ENCODE measurements at regions of chr4 and their contacts with region 1.

Region 1: GRCh38 chr4:1289207-1290164 is at the start of gene MAEA:
- DNase-seq: peak; percentile 98
- H3K4me3 Mint-ChIP-seq: peak within 1 kb of the TSS; percentile 87
- H3K27ac Mint-ChIP-seq: peak within 1 kb of the TSS; percentile 82
- H3K4me1 Mint-ChIP-seq: peaks cover 40% of the 10 kb centered on the region
- H3K27me3 Mint-ChIP-seq: no peaks in the 10 kb centered on the region
- total RNA-seq, gene MAEA: 25.2 to 29.4 TPM

Region 2: GRCh38 chr4:1130316-1131186 is 158.9 kb before region 1 on chr4:
- CTCF ChIA-PET with region 1: interaction called, 54 read pairs
- intact Hi-C with region 1: loop called (anchors 1 kb)
- DNase-seq: peak; percentile 80
- H3K4me3 Mint-ChIP-seq: no peak overlapping the region
- H3K27ac Mint-ChIP-seq: no peak overlapping the region
- H3K4me1 Mint-ChIP-seq: peaks cover 2% of the 10 kb centered on the region
- H3K27me3 Mint-ChIP-seq: peaks cover 4% of the 10 kb centered on the region

Region 3: GRCh38 chr4:1167247-1167949 is 122.1 kb before region 1 on chr4:
- CTCF ChIA-PET with region 1: interaction called, 5 read pairs
- intact Hi-C with region 1: loop called (anchors 1 kb)
- DNase-seq: peak; percentile 93
- H3K4me3 Mint-ChIP-seq: peak overlapping the region; percentile 74
- H3K27ac Mint-ChIP-seq: no peak overlapping the region
- H3K4me1 Mint-ChIP-seq: peaks cover 18% of the 10 kb centered on the region
- H3K27me3 Mint-ChIP-seq: peaks cover 15% of the 10 kb centered on the region

Region 4: DNA sequence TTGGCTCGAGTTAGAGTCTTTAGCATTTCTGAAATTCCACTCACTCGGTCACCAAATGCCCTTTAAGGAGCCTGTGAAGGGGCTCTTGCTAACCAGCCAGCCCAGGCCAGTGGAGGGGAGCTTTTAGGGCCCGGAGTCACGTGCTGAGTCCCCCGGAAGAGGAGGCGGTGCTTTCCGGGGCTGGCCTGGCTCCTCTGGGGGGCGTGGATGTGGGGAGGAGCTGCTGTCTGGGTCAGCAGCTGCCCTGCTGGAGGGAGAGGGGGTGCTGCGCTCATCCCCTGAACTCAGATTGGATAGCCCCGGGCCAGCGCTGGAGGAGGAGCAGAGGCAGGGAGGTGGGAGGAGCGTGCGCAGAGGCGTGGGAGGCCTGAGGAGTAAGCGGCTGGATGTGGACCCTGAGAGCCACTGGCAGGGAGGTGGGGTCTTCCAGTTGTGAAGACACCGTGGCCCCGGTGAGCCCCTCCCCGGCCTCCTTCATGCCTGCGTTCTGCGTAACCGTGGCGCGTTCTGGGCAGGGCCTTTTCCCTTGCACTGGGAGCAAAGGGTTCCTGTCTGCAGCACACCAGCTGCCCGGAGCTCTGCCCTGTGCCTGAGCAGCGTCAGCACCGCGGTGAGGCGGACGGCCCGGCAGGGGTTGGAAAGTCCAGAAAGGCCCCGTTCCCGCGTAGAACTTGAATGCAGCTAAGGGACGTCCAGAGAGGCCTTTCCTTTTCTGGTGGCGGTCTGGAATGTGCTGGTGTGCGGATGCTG is 19.9 kb after region 1 on chr4:
- CTCF ChIA-PET with region 1: interaction called, 6 read pairs
- intact Hi-C with region 1: loop called (anchors 2 kb)
- DNase-seq: peak; percentile 70
- H3K4me3 Mint-ChIP-seq: peak overlapping the region; percentile 67
- H3K27ac Mint-ChIP-seq: peak overlapping the region; percentile 72
- H3K4me1 Mint-ChIP-seq: peaks cover 67% of the 10 kb centered on the region
- H3K27me3 Mint-ChIP-seq: no peaks in the 10 kb centered on the region

Region 5: DNA sequence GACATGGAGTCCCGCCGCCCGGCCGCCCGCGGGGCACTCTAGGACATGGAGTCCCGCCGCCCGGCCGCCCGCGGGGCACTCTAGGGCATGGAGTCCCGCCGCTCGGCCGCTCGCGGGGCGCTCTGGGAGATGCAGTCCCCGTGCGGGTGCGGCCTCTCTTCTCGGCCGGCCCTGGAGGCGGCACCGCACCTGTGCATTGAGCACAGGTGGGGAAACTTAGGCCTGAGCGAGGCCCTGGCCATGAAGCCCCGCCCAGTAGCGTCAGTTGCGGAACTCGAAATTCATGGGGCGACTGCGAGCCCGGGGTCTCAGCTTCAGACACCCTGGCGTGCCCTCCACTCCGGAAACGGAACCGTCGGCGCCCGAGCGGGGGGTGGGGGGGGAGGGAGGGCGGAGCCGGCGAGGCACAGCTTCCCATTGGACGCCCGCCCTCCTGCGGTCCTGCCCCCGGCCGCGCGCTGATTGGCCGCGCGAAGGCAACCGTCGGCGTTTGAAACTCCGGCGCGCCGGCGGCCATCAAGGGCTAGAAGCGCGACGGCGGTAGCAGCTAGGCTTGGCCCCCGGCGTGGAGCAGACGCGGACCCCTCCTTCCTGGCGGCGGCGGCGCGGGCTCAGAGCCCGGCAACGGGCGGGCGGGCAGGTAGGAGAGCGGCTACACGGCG is 431.6 kb after region 1 on chr4 and contains the starts of genes TACC3 and TMEM129:
- CTCF ChIA-PET with region 1: no interaction called
- intact Hi-C with region 1: loop called (anchors 5 kb)
- DNase-seq: peak; percentile 96
- H3K4me3 Mint-ChIP-seq: peak within 1 kb of the TSS; percentile 94
- H3K27ac Mint-ChIP-seq: peak within 1 kb of the TSS; percentile 98
- H3K4me1 Mint-ChIP-seq: peaks cover 53% of the 10 kb centered on the region
- H3K27me3 Mint-ChIP-seq: no peaks in the 10 kb centered on the region
- total RNA-seq, gene TACC3: 246 to 264 TPM
- total RNA-seq, gene TMEM129: 19.0 to 19.8 TPM